Activated CD4-positive, alpha-beta memory T cell treated with anti-CD3 and anti-CD28 coated beads, Interleukin-2, amount 10 ng/mL, durations not matched to agents 7 days and 5 days (primary cell): ENCODE measurements at regions of chr19 and their contacts with region 1.

Region 1: GRCh38 chr19:57682226-57682766 is 519 bp downstream of the ZNF551 start:
- DNase-seq: no peak
- H3K4me3 Mint-ChIP-seq: peak overlapping the region; percentile 94
- H3K27ac Mint-ChIP-seq: peak overlapping the region; percentile 84
- H3K4me1 Mint-ChIP-seq: peaks cover 30% of the 10 kb centered on the region
- H3K27me3 Mint-ChIP-seq: no peaks in the 10 kb centered on the region

Region 2: GRCh38 chr19:57566396-57567265 is 115.7 kb before region 1 on chr19:
- CTCF ChIA-PET with region 1: no interaction called
- POLR2A ChIA-PET with region 1: no interaction called
- DNase-seq: no peak
- H3K4me3 Mint-ChIP-seq: no peak overlapping the region
- H3K27ac Mint-ChIP-seq: no peak overlapping the region
- H3K4me1 Mint-ChIP-seq: no peaks in the 10 kb centered on the region
- H3K27me3 Mint-ChIP-seq: no peaks in the 10 kb centered on the region

Region 3: GRCh38 chr19:57632987-57633831 is 49.1 kb before region 1 on chr19 and contains the start of gene ZNF211:
- CTCF ChIA-PET with region 1: interaction called, 9 read pairs
- POLR2A ChIA-PET with region 1: interaction called, 11 read pairs
- DNase-seq: peak; percentile 89
- H3K4me3 Mint-ChIP-seq: peak within 1 kb of the TSS; percentile 93
- H3K27ac Mint-ChIP-seq: peak within 1 kb of the TSS; percentile 75
- H3K4me1 Mint-ChIP-seq: peaks cover 19% of the 10 kb centered on the region
- H3K27me3 Mint-ChIP-seq: no peaks in the 10 kb centered on the region
- total RNA-seq, gene ZNF211: 17.8 to 20.4 TPM

Region 4: GRCh38 chr19:57746580-57747471 is 64.5 kb after region 1 on chr19 and contains the start of gene ZNF776:
- CTCF ChIA-PET with region 1: no interaction called
- POLR2A ChIA-PET with region 1: interaction called, 10 read pairs
- DNase-seq: peak; percentile 87
- H3K4me3 Mint-ChIP-seq: peak within 1 kb of the TSS; percentile 91
- H3K27ac Mint-ChIP-seq: peak within 1 kb of the TSS; percentile 84
- H3K4me1 Mint-ChIP-seq: peaks cover 23% of the 10 kb centered on the region
- H3K27me3 Mint-ChIP-seq: no peaks in the 10 kb centered on the region
- total RNA-seq, gene ZNF776: 14.9 to 15.1 TPM

Region 5: GRCh38 chr19:57769345-57770131 is 87.2 kb after region 1 on chr19 and contains the start of gene ZNF586:
- CTCF ChIA-PET with region 1: no interaction called
- POLR2A ChIA-PET with region 1: interaction called, 10 read pairs
- DNase-seq: peak; percentile 90
- H3K4me3 Mint-ChIP-seq: peak within 1 kb of the TSS; percentile 95
- H3K27ac Mint-ChIP-seq: peak within 1 kb of the TSS; percentile 90
- H3K4me1 Mint-ChIP-seq: peaks cover 37% of the 10 kb centered on the region
- H3K27me3 Mint-ChIP-seq: no peaks in the 10 kb centered on the region
- total RNA-seq, gene ZNF586: 20.1 to 21.8 TPM

Region 6: DNA sequence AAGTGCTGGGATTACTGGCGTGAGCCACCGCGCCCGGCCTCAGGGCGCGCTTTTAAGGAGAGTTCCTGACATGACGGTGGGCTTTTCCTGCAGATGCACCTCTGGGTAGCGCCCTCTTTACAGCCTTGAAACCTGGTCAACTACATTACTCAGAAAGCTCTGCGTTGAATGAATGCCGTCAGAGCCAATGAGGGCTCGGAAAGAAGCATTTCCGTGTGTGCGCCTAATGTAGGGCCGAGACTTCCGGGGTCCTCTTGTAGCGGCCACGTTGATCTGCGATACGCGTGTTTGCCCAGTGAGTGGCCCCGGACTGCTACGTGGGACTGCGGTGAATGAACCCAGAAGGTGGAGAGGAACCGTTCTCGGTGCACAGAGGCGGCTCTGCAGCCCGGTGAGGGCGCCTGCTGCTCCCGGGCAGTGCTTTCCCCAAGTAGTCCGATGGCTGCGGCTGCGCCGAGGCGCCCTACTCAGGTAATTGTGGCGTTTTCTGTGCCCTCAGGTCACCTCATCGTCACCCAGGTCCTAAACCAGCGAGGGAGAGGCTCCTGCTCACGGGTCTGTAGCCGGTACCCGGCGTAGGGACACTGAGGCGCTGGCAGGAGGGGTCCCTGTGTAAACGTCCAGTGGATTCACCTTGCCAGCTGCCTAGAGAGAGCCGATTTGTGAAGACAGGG is 137.3 kb after region 1 on chr19:
- CTCF ChIA-PET with region 1: interaction called, 7 read pairs
- POLR2A ChIA-PET with region 1: interaction called, 12 read pairs
- DNase-seq: peak; percentile 84
- H3K4me3 Mint-ChIP-seq: peak overlapping the region; percentile 95
- H3K27ac Mint-ChIP-seq: peak overlapping the region; percentile 94
- H3K4me1 Mint-ChIP-seq: peaks cover 60% of the 10 kb centered on the region
- H3K27me3 Mint-ChIP-seq: no peaks in the 10 kb centered on the region